Activated B cell treated with CpG ODN at 0.5 μM for 24 hours (primary cell): ENCODE measurements at regions of chr1 and their contacts with region 1.

Region 1: GRCh38 chr1:112466078-112466660 is 42.6 kb upstream of the WNT2B start:
- DNase-seq: peak; percentile 81
- ATAC-seq: peak; percentile 93
- H3K4me3 Mint-ChIP-seq: peak overlapping the region; percentile 77
- H3K27ac Mint-ChIP-seq: peak overlapping the region; percentile 88
- H3K4me1 Mint-ChIP-seq: peaks cover 54% of the 10 kb centered on the region
- H3K27me3 Mint-ChIP-seq: peaks cover 16% of the 10 kb centered on the region
- CTCF ChIP-seq: no peak

Region 2: GRCh38 chr1:112369392-112370285 is 96.5 kb before region 1 on chr1:
- CTCF ChIA-PET with region 1: no interaction called
- POLR2A ChIA-PET with region 1: no interaction called
- intact Hi-C with region 1: no loop called
- DNase-seq: peak; percentile 72
- ATAC-seq: peak; percentile 100
- H3K4me3 Mint-ChIP-seq: no peak overlapping the region
- H3K27ac Mint-ChIP-seq: no peak overlapping the region
- H3K4me1 Mint-ChIP-seq: peaks cover 4% of the 10 kb centered on the region
- H3K27me3 Mint-ChIP-seq: peaks cover 37% of the 10 kb centered on the region
- CTCF ChIP-seq: peak; percentile 87

Region 3: GRCh38 chr1:112501810-112502641 is 35.9 kb after region 1 on chr1:
- CTCF ChIA-PET with region 1: interaction called, 8 read pairs
- POLR2A ChIA-PET with region 1: interaction called, 9 read pairs
- intact Hi-C with region 1: loop called (anchors 1 kb)
- DNase-seq: peak; percentile 51
- ATAC-seq: peak; percentile 69
- H3K4me3 Mint-ChIP-seq: peak overlapping the region; percentile 70
- H3K27ac Mint-ChIP-seq: no peak overlapping the region
- H3K4me1 Mint-ChIP-seq: peaks cover 34% of the 10 kb centered on the region
- H3K27me3 Mint-ChIP-seq: peaks cover 51% of the 10 kb centered on the region
- CTCF ChIP-seq: no peak

Region 4: DNA sequence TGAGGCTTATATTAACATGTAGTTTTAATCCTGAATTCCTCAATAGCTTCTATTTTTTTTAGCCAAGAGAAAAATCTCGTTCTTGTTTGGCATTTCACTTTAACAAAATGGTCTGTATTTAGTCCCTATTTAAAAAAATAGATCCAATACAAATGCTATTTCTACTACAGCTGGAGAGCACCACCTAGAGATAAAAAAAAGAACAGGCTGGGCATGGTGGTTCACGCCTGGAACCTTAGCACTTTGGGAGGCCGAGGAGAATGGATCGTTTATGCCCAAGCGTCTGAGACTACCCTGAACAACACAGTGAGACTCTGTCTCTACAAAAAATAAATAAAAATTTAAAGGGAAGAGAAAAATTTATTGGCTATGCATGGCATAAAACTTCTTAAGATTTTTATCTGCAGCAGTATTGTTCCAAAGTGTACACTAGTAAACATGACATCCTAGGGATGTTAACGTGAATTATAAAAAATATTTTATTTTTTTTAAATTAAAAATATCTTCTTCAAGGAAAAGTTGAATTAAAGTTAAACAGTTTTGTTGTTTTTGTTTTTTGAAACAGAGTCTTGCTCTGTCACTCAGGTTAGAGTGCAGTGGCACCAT is 148.4 kb after region 1 on chr1:
- CTCF ChIA-PET with region 1: no interaction called
- POLR2A ChIA-PET with region 1: interaction called, 12 read pairs
- intact Hi-C with region 1: loop called (anchors 1 kb)
- DNase-seq: no peak
- ATAC-seq: no peak
- H3K4me3 Mint-ChIP-seq: no peak overlapping the region
- H3K27ac Mint-ChIP-seq: no peak overlapping the region
- H3K4me1 Mint-ChIP-seq: peaks cover 13% of the 10 kb centered on the region
- H3K27me3 Mint-ChIP-seq: no peaks in the 10 kb centered on the region
- CTCF ChIP-seq: no peak

Region 5: GRCh38 chr1:112955781-112956543 is 489.8 kb after region 1 on chr1 and contains the start of gene SLC16A1:
- CTCF ChIA-PET with region 1: no interaction called
- POLR2A ChIA-PET with region 1: no interaction called
- intact Hi-C with region 1: loop called (anchors 2 kb)
- DNase-seq: peak; percentile 89
- ATAC-seq: peak; percentile 82
- H3K4me3 Mint-ChIP-seq: peak within 1 kb of the TSS; percentile 98
- H3K27ac Mint-ChIP-seq: peak within 1 kb of the TSS; percentile 98
- H3K4me1 Mint-ChIP-seq: peaks cover 49% of the 10 kb centered on the region
- H3K27me3 Mint-ChIP-seq: no peaks in the 10 kb centered on the region
- CTCF ChIP-seq: no peak
- total RNA-seq, gene SLC16A1: 17.8 and 17.9 TPM in 2 replicates